ENCODE measurements at regions of chr9 and their contacts with region 1.

Region 1: DNA sequence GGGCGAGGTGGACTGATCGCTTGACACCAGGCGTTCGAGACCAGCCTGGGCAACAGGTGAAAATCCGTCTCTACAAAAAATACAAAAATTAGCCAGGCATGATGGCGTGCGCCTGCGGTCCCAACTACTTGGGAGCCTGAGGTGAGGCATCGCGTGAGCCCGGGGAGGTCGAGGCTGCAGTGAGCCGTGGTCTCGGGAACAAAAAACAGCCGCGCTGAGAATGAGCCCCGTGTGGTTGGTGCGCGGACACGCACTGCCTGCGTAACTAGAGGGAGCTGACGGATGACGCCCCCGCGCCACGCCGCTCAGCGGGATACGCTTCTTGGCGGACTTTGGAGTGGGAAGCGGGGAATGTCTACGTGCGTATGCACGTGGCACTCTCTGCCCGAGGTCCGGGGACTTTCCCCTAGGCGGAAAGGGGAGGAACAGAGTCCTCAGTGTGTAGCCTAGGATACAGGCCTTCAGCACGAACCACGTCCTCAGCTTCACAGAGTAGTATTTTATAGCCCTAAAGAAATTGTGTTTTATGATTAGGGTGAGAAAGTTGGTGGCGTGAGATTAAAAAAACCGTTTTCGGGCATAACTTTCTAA is at the start of gene RMRP:
- DNase-seq: peak; percentile 67 to 93 (median 91)
- ATAC-seq: peak; percentile 87
- H3K4me3 ChIP-seq: peak within 1 kb of the TSS; percentile 94
- H3K4me3 Mint-ChIP-seq: peak within 1 kb of the TSS; percentile 78 to 95 (median 90)
- H3K27ac ChIP-seq: peak within 1 kb of the TSS; percentile 99
- H3K27ac Mint-ChIP-seq: peak within 1 kb of the TSS; percentile 97 to 100 (median 100)
- H3K4me1 ChIP-seq: peaks cover 35 to 48% of the 10 kb centered on the region in 2 donors
- H3K4me1 Mint-ChIP-seq: peaks cover 42 to 78% (median 69%) of the 10 kb centered on the region in 7 donors
- H3K27me3 ChIP-seq: no peaks in the 10 kb centered on the region
- H3K27me3 Mint-ChIP-seq: peaks cover 0 to 6% (median 0%) of the 10 kb centered on the region in 5 donors
- total RNA-seq, gene RMRP: 5,750 to 11,273 (median 9,225) TPM

Region 2: GRCh38 chr9:35111001-35111933 is 546.4 kb before region 1 on chr9:
- CTCF ChIA-PET with region 1: no interaction called
- POLR2A ChIA-PET with region 1: no interaction called
- intact Hi-C with region 1: loop called in 1 of 2 experiments (anchors 5 kb)
- DNase-seq: peak; percentile 77 to 96 (median 91)
- ATAC-seq: peak; percentile 86
- H3K4me3 ChIP-seq: peak overlapping the region; percentile 69
- H3K4me3 Mint-ChIP-seq: peak overlapping the region; percentile 55 to 87 (median 80)
- H3K27ac ChIP-seq: peak overlapping the region; percentile 71
- H3K27ac Mint-ChIP-seq: peak overlapping the region; percentile 62 to 94 (median 85)
- H3K4me1 ChIP-seq: peaks cover 36 to 37% of the 10 kb centered on the region in 2 donors
- H3K4me1 Mint-ChIP-seq: peaks cover 29 to 63% (median 58%) of the 10 kb centered on the region in 7 donors
- H3K27me3 ChIP-seq: no peaks in the 10 kb centered on the region
- H3K27me3 Mint-ChIP-seq: no peaks in the 10 kb centered on the region

Region 3: DNA sequence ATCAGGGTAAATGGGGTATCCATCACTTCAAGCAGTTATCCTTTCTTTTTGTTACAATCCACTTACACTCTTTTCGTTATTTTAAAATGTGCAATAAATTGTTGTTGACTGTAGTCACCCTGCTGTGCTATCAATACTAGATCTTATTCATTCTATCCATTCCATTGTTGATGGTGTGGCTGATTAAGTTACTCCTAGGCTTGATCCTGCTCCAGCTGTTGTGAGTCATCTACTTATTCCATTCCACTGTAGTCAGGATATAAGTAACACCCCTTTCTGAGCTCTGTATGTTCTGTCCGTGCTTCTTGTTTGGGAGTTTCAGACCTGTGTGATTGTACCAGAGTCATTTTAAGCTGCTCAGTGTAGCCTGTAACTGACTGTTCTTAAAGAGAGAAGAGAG is 290.2 kb before region 1 on chr9:
- CTCF ChIA-PET with region 1: no interaction called
- POLR2A ChIA-PET with region 1: no interaction called
- intact Hi-C with region 1: no loop called
- DNase-seq: no peak
- ATAC-seq: no peak
- H3K4me3 ChIP-seq: no peak overlapping the region
- H3K4me3 Mint-ChIP-seq: no peak overlapping the region
- H3K27ac ChIP-seq: no peak overlapping the region
- H3K27ac Mint-ChIP-seq: no peak overlapping the region
- H3K4me1 ChIP-seq: peaks cover 0 to 5% of the 10 kb centered on the region in 2 donors
- H3K4me1 Mint-ChIP-seq: peaks cover 0 to 10% (median 2%) of the 10 kb centered on the region in 7 donors
- H3K27me3 ChIP-seq: no peaks in the 10 kb centered on the region
- H3K27me3 Mint-ChIP-seq: peaks cover 0 to 3% (median 0%) of the 10 kb centered on the region in 5 donors

Region 4: DNA sequence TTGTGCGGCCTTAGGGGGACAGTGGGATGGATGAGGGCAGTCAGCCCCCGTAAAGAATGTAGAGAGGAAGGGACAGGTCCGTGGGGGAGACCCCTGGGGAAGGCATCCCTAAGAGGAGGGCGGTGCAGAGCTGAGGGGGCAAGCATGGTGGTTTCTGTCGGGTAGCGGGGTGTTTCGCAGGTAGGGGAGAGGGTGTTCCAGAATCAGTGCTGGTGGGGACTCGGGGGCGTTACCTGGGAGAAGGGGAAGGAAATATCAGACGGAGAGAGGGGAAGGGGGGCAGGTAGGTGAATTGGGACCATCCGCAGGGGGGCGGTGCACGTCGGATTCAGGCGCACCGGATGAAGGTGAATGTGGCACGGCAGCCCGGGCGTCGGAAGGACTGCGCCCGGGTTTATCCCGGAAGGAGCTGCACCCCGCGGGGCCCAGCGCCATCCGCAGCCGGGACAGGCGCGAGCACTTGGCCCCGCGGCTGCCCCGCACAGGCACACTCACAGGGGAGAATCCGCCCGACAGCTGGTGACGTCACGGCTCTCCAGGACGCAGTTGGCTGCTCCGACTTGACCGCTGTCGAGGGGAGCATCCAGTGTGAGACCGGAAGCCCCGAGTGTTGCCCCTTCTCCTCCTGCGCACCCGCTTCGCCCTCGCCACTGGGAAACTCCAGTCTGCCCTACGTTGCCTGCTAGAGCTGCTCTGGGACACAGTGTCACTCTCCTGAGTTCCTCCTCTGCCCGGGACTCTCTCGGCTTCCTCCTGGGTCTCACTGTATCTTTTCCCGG is 40.8 kb before region 1 on chr9:
- CTCF ChIA-PET with region 1: interaction called, 118 read pairs
- POLR2A ChIA-PET with region 1: interaction called, 33 read pairs
- intact Hi-C with region 1: loop called in 1 of 2 experiments (anchors 1 kb)
- DNase-seq: peak; percentile 46 to 71 (median 64)
- ATAC-seq: peak; percentile 80
- H3K4me3 ChIP-seq: peak overlapping the region; percentile 84
- H3K4me3 Mint-ChIP-seq: peak overlapping the region; percentile 82 to 89 (median 86)
- H3K27ac ChIP-seq: peak overlapping the region; percentile 71
- H3K27ac Mint-ChIP-seq: peak overlapping the region; percentile 84 to 93 (median 91)
- H3K4me1 ChIP-seq: peaks cover 27 to 36% of the 10 kb centered on the region in 2 donors
- H3K4me1 Mint-ChIP-seq: peaks cover 33 to 44% (median 38%) of the 10 kb centered on the region in 7 donors
- H3K27me3 ChIP-seq: no peaks in the 10 kb centered on the region
- H3K27me3 Mint-ChIP-seq: no peaks in the 10 kb centered on the region

Region 5: DNA sequence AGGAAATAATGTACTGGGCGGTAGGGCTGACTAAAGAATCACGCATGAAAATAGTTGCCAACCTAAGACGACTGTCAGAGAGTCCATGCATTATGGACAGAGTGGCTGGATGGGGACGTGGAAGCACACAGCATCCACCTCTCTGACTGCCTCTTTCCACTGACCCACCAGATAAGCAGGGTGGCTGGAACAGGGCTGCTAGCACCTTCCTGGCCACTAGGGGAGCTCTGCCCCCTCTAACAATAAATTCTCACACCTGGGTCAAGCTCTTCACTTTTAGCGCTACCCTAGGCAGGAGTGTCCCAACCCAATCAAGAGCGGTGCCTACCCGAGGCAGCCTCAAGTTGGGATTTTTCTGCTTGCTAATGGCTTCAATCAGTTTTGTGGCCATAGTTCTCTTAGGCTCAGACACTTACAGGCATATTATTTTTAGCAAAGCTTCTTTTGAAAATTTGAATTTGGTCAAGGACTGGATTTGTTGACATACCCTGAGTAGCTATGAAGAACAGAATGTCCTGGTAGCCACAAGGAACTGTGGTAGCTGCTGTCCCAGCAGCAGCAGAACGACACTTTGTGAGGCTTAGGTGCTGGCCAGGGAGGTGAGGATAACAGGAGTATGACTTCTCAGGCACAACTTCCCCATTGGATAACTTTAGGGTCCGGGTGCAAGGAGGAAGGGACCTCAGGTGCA is 39.0 kb after region 1 on chr9:
- CTCF ChIA-PET with region 1: interaction called, 107 read pairs
- POLR2A ChIA-PET with region 1: interaction called, 13 read pairs
- intact Hi-C with region 1: loop called (anchors 1 kb)
- DNase-seq: peak in 8 of 9 donors; percentile 15 to 56 (median 41)
- ATAC-seq: peak; percentile 91
- H3K4me3 ChIP-seq: no peak overlapping the region
- H3K4me3 Mint-ChIP-seq: no peak overlapping the region
- H3K27ac ChIP-seq: no peak overlapping the region
- H3K27ac Mint-ChIP-seq: peak overlapping the region in 8 of 9 donors; percentile 33 to 85 (median 66)
- H3K4me1 ChIP-seq: peaks cover 0 to 10% of the 10 kb centered on the region in 2 donors
- H3K4me1 Mint-ChIP-seq: peaks cover 6 to 15% (median 12%) of the 10 kb centered on the region in 7 donors
- H3K27me3 ChIP-seq: no peaks in the 10 kb centered on the region
- H3K27me3 Mint-ChIP-seq: no peaks in the 10 kb centered on the region

Region 6: GRCh38 chr9:35756275-35757225 is 98.9 kb after region 1 on chr9:
- CTCF ChIA-PET with region 1: interaction called, 4 read pairs
- POLR2A ChIA-PET with region 1: interaction called, 5 read pairs
- intact Hi-C with region 1: loop called in 1 of 2 experiments (anchors 1 kb)
- DNase-seq: peak; percentile 58 to 80 (median 75)
- ATAC-seq: peak; percentile 95
- H3K4me3 ChIP-seq: peak overlapping the region; percentile 92
- H3K4me3 Mint-ChIP-seq: peak overlapping the region; percentile 89 to 100 (median 96)
- H3K27ac ChIP-seq: peak overlapping the region; percentile 82
- H3K27ac Mint-ChIP-seq: peak overlapping the region; percentile 88 to 99 (median 94)
- H3K4me1 ChIP-seq: peaks cover 6 to 9% of the 10 kb centered on the region in 2 donors
- H3K4me1 Mint-ChIP-seq: peaks cover 34 to 61% (median 52%) of the 10 kb centered on the region in 7 donors
- H3K27me3 ChIP-seq: no peaks in the 10 kb centered on the region
- H3K27me3 Mint-ChIP-seq: no peaks in the 10 kb centered on the region

Region 7: DNA sequence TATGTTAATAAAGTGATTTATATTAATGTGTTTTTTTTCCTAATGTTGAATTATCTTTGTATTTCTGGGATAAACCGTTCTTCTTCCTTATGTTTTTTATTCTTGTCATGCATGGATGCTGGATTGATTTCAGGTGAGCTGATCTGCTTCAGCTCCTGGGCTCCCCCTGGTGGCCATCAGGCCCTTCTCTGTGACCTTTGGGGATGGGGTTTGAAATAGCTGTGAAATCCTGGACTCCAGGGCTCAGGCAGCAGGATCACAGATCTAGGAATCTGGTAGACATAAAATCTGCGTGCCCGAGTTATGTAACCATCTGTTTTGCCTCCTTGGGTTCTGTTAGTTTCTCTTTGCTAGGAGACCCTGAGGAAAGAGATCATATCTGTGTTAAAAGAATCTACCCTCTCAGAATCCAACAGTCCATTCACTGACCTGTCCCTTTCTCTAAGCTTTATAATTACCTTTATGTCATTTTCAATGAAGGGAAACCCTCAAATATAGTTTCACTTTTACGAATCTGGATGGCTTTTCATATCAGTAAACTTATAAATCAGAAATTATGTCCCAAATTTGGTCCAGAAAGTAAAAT is 224.7 kb after region 1 on chr9:
- CTCF ChIA-PET with region 1: interaction called, 3 read pairs
- POLR2A ChIA-PET with region 1: no interaction called
- intact Hi-C with region 1: loop called in 1 of 2 experiments (anchors 1 kb)
- DNase-seq: peak; percentile 54 to 83 (median 71)
- ATAC-seq: peak; percentile 72
- H3K4me3 ChIP-seq: no peak overlapping the region
- H3K4me3 Mint-ChIP-seq: peak overlapping the region in 1 of 10 donors; percentile 18
- H3K27ac ChIP-seq: no peak overlapping the region
- H3K27ac Mint-ChIP-seq: no peak overlapping the region
- H3K4me1 ChIP-seq: no peaks in the 10 kb centered on the region
- H3K4me1 Mint-ChIP-seq: peaks cover 0 to 2% (median 0%) of the 10 kb centered on the region in 7 donors
- H3K27me3 ChIP-seq: no peaks in the 10 kb centered on the region
- H3K27me3 Mint-ChIP-seq: peaks cover 0 to 45% (median 8%) of the 10 kb centered on the region in 5 donors

Measured in naive thymus-derived CD4-positive, alpha-beta T cell (primary cell).